Esophagus muscularis mucosa (tissue), 4 donors: ENCODE measurements at regions of chr15 and their contacts with region 1.

Region 1: DNA sequence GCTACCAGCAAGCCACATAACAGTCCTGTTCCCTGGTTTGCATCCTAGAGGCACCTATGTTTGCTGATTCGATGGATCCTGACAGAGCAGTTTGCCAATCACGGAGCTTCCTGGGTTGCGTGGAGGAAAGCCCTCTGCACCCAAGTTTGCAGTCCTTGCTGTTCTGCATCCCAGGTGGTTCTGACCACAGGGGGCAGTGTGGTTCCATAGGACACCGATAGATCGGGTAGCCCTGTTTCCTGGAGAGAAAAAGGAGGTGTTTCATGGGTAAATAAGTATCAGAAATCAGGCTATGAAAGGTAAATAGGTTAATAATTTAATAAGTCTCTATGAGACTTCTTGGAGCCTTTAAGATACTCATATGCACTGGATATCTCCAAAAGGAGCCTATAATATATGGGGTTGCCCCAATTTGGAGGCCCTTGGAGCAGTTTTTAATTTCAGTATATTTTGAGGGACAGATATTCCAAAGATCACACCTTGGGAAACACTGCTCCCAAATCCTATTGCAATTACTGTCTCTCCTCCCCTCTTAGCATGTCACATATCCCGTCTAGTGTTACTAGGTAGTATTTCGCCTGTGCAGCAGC is 194.6 kb upstream of the TPM1 start:
- DNase-seq: no peak
- H3K4me3 ChIP-seq: no peak overlapping the region
- H3K27ac ChIP-seq: peak overlapping the region; percentile 34 to 66 (median 58)
- H3K4me1 ChIP-seq: peaks cover 15 to 78% (median 49%) of the 10 kb centered on the region in 4 donors
- H3K27me3 ChIP-seq: no peaks in the 10 kb centered on the region
- CTCF ChIP-seq: peak; percentile 79 to 82 (median 80)
- EP300 ChIP-seq: no peak
- POLR2A ChIP-seq: no peak

Region 2: GRCh38 chr15:62909257-62909656 is 61.3 kb after region 1 on chr15:
- intact Hi-C with region 1: loop called (anchors 5 kb)
- DNase-seq: no peak
- H3K4me3 ChIP-seq: no peak overlapping the region
- H3K27ac ChIP-seq: peak overlapping the region in 1 of 4 donors; percentile 95
- H3K4me1 ChIP-seq: peaks cover 9 to 53% (median 50%) of the 10 kb centered on the region in 4 donors
- H3K27me3 ChIP-seq: no peaks in the 10 kb centered on the region
- CTCF ChIP-seq: no peak
- EP300 ChIP-seq: no peak
- POLR2A ChIP-seq: no peak

Region 3: DNA sequence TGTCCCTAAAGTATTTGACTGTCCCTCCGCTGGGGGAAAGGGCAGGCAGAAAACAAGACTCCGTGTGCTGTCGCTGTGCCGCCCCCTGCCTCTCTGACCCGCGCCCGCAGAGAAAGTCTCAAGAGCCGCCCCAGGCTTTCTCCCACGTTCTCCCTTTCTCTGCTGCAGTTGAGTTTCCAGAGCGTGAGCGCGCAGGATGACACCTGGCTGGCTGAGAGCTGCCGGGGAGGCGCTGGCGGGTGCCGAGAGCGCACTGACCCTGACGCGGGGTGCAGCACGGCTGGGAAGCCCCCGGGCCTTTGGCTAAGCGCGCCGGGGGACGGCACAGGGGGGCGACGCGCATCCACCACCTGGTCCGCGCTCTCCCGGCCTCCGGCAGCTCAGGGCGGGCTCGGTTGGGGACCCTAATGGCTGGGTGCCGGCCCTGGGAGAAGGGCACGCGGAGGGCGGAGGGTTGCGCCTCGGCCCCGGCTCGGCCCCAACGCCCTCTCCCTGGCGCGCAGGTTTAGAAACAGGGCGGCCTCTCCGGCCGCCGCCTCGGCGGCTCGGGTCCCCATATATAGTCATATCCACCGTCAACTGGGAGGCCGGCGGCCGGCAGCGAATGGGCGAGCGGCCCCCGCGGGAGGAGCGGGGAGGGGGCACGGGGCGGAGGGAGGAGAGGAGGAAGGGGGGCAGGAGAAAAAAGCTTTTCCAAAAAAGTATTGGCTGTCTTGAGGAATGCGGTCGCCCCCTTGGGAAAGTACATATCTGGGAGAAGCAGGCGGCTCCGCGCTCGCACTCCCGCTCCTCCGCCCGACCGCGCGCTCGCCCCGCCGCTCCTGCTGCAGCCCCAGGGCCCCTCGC is 194.2 kb after region 1 on chr15 and contains the start of gene TPM1:
- intact Hi-C with region 1: loop called (anchors 5 kb)
- DNase-seq: peak; percentile 97
- H3K4me3 ChIP-seq: peak within 1 kb of the TSS; percentile 70 to 91 (median 82)
- H3K27ac ChIP-seq: peak within 1 kb of the TSS; percentile 94 to 97 (median 96)
- H3K4me1 ChIP-seq: peaks cover 5 to 38% (median 20%) of the 10 kb centered on the region in 4 donors
- H3K27me3 ChIP-seq: peaks cover 0 to 10% (median 4%) of the 10 kb centered on the region in 4 donors
- CTCF ChIP-seq: peak in 2 of 3 experiments; percentile 18 to 44
- EP300 ChIP-seq: no peak
- POLR2A ChIP-seq: peak; percentile 73
- total RNA-seq, gene TPM1: 5,599 to 7,718 (median 6,496) TPM

Region 4: DNA sequence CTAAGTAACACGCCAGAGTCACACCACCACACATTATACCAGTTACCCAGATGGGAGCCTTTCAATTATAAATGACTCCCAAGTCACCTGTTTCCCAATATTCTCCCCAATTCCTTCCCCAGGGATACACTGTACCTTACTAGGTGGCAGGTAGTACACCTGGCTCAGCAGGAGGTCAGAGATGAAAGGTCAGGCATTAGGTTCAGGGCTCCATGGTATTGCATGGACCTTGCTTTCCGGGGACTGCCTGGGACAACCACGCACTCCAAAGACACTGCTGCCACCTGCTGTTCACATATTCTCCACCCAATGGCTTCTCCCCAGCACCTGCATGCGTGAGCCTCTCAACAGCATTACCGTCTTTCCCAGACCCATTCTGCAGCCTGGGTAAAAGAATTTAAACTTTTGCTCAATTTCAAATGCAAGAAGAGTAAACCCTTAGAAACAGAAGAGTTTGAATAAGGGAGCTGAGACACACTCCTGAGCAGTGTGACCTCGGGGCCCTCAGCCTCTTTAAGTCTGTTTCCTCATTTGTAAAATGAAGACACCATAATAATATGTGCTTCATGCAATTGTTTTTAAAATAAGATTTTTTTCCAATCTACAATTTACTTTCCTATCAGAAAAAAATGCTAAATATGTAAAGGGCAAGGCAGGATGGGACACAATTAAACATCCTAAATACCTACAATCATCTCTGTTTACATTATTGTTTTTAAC is 245.7 kb after region 1 on chr15:
- intact Hi-C with region 1: loop called (anchors 1 kb)
- DNase-seq: peak; percentile 95
- H3K4me3 ChIP-seq: no peak overlapping the region
- H3K27ac ChIP-seq: peak overlapping the region; percentile 64 to 76 (median 67)
- H3K4me1 ChIP-seq: peaks cover 21 to 36% (median 34%) of the 10 kb centered on the region in 4 donors
- H3K27me3 ChIP-seq: no peaks in the 10 kb centered on the region
- CTCF ChIP-seq: peak; percentile 90 to 93 (median 91)
- EP300 ChIP-seq: no peak
- POLR2A ChIP-seq: no peak